ENCODE measurements at regions of chr4 and their contacts with region 1.

Region 1: GRCh38 chr4:38069271-38069760 is 109.1 kb downstream of the PTTG2 start:
- DNase-seq: no peak

Region 2: DNA sequence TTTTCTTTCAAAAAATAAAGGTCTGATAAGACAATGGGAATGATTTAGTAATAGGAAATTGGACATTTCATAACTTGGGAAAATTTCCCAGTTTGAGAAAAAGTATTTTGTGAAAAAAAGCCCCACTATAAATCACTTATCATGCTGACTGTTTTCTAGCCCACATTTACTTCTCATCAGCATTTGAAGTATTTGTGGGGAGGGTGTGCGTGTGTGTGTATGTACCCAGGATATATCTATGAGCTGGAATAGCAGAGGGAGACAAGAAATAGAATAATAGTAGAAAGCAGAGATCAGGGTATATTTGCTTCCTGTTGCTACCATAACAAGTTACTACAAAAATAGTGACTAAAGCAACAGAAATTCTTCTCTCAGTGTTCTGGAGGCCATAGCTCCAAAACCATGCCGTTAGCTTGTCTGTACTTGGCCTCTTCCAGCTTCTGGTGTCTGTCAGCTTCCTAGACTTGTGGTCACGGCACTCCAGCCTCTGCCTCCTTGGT is 30.6 kb after region 1 on chr4:
- intact Hi-C with region 1: no loop called
- DNase-seq: no peak

Region 3: DNA sequence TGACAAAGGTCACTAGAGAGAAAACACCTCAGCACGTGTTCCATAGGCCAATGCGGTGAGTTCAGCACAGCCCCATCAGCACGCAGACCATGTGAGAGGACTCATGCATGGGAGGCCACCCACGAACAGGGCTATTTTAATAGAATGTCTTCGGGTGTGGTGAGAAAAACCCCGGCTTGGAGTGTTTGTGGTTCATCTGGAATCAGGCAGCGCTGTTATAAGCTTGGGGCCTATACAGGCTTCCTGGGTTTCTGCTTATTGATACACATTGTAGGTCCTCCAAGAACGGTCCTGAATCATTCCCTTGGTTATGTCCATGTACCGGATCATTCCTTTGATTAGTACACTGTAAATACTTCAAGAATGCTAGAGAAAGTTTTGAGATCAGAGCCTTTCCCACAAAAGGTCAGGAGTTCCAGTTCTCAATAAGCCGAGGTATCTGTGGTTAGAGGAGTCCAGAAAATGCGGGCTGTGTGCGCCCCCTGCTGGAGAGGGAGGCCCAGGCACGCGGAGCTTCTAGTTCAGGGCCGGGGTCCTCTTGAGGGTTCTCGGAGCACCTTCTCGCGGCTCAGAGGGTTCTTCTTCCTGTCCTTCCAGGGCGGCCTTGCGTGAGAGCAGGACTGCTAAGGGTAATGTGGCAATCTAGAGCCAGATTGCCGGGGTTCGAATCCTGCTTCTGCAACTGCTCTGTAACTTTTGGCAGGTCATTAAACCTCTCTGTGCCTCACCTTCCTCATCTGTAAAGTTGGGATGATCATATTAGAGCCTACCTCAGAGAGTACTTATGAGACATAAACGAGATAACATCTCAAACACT is 661.7 kb after region 1 on chr4:
- intact Hi-C with region 1: loop called (anchors 5 kb)
- DNase-seq: peak; percentile 95